ENCODE measurements at regions of chr9 and their contacts with region 1.

Region 1: GRCh38 chr9:104991144-104991953 is 63.4 kb upstream of the ABCA1 start:
- DNase-seq: peak; percentile 87 to 95
- ATAC-seq: peak; percentile 78 to 81
- H3K4me3 ChIP-seq: peak overlapping the region; percentile 56 to 69 (median 66)
- H3K27ac ChIP-seq: peak overlapping the region; percentile 87 to 91 (median 90)
- H3K4me1 ChIP-seq: peaks cover 32 to 38% of the 10 kb centered on the region in 2 donors
- H3K27me3 ChIP-seq: no peaks in the 10 kb centered on the region
- CTCF ChIP-seq: no peak
- POLR2A ChIP-seq: peak in 1 of 2 donors; percentile 61

Region 2: GRCh38 chr9:104774831-104775573 is 216.3 kb before region 1 on chr9:
- in situ Hi-C with region 1: no loop called
- intact Hi-C with region 1: loop called (anchors 10 kb)
- DNase-seq: peak; percentile 38 to 64
- ATAC-seq: peak; percentile 75 to 87
- H3K4me3 ChIP-seq: peak overlapping the region in 2 of 4 donors; percentile 11 to 35
- H3K27ac ChIP-seq: peak overlapping the region; percentile 79 to 89 (median 88)
- H3K4me1 ChIP-seq: peaks cover 43 to 59% of the 10 kb centered on the region in 2 donors
- H3K27me3 ChIP-seq: no peaks in the 10 kb centered on the region
- CTCF ChIP-seq: no peak
- POLR2A ChIP-seq: peak; percentile 48 to 58

Region 3: GRCh38 chr9:104868687-104869404 is 122.5 kb before region 1 on chr9:
- in situ Hi-C with region 1: loop called in 3 of 4 experiments (anchors 10 to 25 kb)
- intact Hi-C with region 1: loop called (anchors 5 kb)
- DNase-seq: peak; percentile 78 to 90
- ATAC-seq: peak; percentile 88 to 89
- H3K4me3 ChIP-seq: peak overlapping the region in 1 of 4 donors; percentile 14
- H3K27ac ChIP-seq: peak overlapping the region; percentile 84 to 92 (median 90)
- H3K4me1 ChIP-seq: peaks cover 67 to 69% of the 10 kb centered on the region in 2 donors
- H3K27me3 ChIP-seq: no peaks in the 10 kb centered on the region
- CTCF ChIP-seq: no peak
- POLR2A ChIP-seq: no peak

Region 4: GRCh38 chr9:104968025-104968982 is 23.0 kb before region 1 on chr9:
- in situ Hi-C with region 1: no loop called
- intact Hi-C with region 1: loop called (anchors 1 kb)
- DNase-seq: peak; percentile 77 to 94
- ATAC-seq: peak; percentile 91 to 93
- H3K4me3 ChIP-seq: peak overlapping the region; percentile 80 to 97 (median 82)
- H3K27ac ChIP-seq: peak overlapping the region; percentile 94 to 99 (median 96)
- H3K4me1 ChIP-seq: peaks cover 21 to 25% of the 10 kb centered on the region in 2 donors
- H3K27me3 ChIP-seq: no peaks in the 10 kb centered on the region
- CTCF ChIP-seq: peak in 1 of 5 experiments; percentile 25
- POLR2A ChIP-seq: peak in 1 of 2 donors; percentile 54

Region 5: DNA sequence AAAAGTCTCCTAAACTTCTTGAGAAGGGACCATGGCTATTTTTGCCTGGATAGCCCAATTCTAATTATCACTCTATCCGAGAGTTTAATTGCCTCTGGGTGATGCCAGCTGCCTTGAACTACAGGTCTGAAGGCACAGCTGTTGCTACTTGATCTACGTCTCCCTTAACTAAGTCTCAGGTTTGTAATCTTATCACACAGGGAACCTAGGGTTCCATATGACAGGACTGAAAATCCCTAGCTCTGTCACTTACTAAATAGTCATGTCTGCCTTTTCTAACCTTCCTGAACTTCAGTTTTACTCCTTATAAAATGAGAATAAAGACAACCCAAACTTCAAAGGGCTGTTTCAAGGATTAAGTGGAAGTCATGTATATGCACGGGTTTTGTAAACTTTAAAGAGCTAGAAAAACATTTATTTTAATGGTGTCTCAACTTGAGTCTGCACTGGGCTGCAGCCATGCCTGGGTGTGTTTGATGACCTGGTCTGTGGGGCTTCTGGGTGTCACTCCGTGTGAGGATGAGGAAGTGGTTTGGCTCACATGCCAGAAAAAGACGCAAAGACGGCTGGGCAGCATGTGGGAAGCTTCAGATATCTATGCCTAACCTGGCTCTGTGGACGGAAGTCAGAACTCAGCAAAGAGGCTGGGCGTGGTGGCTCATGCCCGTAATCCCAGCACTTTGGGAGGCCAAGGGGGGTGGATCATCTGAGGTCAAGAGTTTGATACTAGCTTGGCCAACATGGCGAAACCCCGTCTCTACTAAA is 123.8 kb after region 1 on chr9:
- in situ Hi-C with region 1: no loop called
- intact Hi-C with region 1: loop called (anchors 2 kb)
- DNase-seq: peak; percentile 30 to 58
- ATAC-seq: peak; percentile 22 to 51
- H3K4me3 ChIP-seq: no peak overlapping the region
- H3K27ac ChIP-seq: peak overlapping the region; percentile 73 to 82 (median 80)
- H3K4me1 ChIP-seq: peaks cover 19 to 36% of the 10 kb centered on the region in 2 donors
- H3K27me3 ChIP-seq: no peaks in the 10 kb centered on the region
- CTCF ChIP-seq: no peak
- POLR2A ChIP-seq: peak in 1 of 2 donors; percentile 51

Region 6: DNA sequence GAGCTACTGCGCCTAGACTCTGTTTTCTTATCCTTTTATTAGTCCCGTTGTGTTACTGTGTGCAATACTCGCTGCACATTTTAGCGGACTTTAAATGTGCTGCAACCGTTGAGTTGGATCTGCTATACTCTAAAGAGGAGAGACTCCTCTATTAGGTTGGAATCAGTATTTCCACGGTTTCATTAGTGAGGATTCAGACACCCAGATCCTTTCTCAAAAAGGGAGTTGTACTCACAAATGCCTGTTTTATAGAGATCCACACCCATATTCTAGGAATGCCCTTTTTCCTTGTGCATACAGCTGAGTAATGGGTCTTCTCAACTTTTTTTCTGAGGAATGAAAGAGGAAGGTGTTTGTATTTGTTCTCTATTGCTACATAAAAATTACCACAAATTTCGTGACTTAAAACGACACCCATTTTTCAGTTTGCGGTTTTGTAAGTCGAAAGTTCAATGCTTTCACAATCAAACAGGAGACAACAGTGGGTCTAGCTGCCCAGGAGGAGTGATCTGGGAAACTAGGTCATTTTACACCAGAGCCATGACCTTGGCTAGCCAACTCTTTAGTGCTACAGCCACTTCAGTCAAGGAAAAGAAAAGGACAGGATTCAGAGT is 200.3 kb after region 1 on chr9:
- in situ Hi-C with region 1: no loop called
- intact Hi-C with region 1: no loop called
- DNase-seq: peak; percentile 19 to 50
- ATAC-seq: peak; percentile 72 to 81
- H3K4me3 ChIP-seq: no peak overlapping the region
- H3K27ac ChIP-seq: peak overlapping the region in 2 of 4 donors; percentile 26 to 31
- H3K4me1 ChIP-seq: no peaks in the 10 kb centered on the region
- H3K27me3 ChIP-seq: no peaks in the 10 kb centered on the region
- CTCF ChIP-seq: no peak
- POLR2A ChIP-seq: no peak

Region 7: DNA sequence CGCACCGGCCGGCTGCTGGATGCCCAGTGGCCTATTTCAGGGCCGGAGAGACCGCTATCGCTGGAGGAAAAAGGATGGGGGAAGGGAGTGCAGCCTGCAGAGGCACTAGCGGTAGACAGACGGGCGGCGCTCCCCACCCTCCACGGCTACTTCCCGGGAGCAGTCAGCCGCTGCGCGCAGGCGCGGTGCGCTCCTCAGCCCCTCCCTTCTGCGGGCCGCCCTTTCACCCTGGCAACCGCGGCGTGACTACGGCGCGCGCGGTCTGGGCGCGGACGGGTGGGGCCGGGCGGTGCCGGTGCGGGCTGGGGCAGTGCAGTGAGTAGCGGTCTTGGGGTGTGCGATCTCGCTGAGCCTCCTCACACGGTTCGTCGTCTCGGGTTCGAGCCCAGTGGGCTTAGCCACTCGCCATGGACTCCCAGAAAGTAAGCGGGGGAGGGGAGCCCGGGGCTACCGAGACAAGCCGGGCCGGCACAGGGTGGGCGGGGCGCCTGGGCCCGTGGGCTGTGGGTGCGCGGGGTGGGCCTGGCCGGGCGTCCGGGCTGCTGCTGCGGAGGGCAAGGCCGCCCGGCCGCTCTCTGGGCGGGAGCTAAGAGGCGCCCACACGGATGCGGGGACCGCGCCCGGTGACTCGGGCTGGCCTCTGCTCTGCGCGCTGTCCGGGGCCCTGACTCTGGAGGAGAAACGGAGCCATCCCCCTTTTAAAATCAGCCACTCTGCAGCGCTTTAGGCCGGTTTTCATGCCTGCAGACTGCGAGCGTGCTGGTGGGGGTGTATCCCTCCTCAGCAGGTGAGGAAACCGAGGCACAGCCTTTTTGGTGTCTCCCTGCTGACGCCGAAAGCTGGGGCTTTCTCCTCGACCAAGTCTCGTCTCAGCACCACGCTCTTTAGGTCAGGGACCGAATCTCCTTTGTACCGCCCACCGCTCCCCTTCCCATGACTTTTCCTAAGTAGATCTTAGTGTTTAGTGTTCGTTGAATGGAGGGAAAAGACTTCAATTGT is 456.8 kb after region 1 on chr9 and contains the start of gene FSD1L:
- in situ Hi-C with region 1: no loop called
- intact Hi-C with region 1: loop called (anchors 10 kb)
- DNase-seq: peak; percentile 88 to 94
- ATAC-seq: peak; percentile 57 to 66
- H3K4me3 ChIP-seq: peak within 1 kb of the TSS; percentile 70 to 94 (median 74)
- H3K27ac ChIP-seq: peak within 1 kb of the TSS; percentile 93 to 96 (median 95)
- H3K4me1 ChIP-seq: peaks cover 49 to 60% of the 10 kb centered on the region in 2 donors
- H3K27me3 ChIP-seq: no peaks in the 10 kb centered on the region
- CTCF ChIP-seq: peak in 2 of 5 experiments; percentile 8 to 32
- POLR2A ChIP-seq: peak; percentile 86 to 97
- total RNA-seq, gene FSD1L: 8.5 to 19.6 (median 12.4) TPM